Activated naive CD8-positive, alpha-beta T cell treated with anti-CD3 and anti-CD28 coated beads, Interleukin-2, amount 10 ng/mL, durations not matched to agents 7 days and 5 days (primary cell): ENCODE measurements at regions of chr1 and their contacts with region 1.

Region 1: GRCh38 chr1:223831755-223832636 is 13.8 kb downstream of the TP53BP2 start:
- DNase-seq: no peak
- ATAC-seq: peak; percentile 44
- H3K4me3 Mint-ChIP-seq: peak overlapping the region; percentile 43
- H3K27ac Mint-ChIP-seq: peak overlapping the region; percentile 37
- H3K4me1 Mint-ChIP-seq: peaks cover 18% of the 10 kb centered on the region
- H3K27me3 Mint-ChIP-seq: no peaks in the 10 kb centered on the region

Region 2: DNA sequence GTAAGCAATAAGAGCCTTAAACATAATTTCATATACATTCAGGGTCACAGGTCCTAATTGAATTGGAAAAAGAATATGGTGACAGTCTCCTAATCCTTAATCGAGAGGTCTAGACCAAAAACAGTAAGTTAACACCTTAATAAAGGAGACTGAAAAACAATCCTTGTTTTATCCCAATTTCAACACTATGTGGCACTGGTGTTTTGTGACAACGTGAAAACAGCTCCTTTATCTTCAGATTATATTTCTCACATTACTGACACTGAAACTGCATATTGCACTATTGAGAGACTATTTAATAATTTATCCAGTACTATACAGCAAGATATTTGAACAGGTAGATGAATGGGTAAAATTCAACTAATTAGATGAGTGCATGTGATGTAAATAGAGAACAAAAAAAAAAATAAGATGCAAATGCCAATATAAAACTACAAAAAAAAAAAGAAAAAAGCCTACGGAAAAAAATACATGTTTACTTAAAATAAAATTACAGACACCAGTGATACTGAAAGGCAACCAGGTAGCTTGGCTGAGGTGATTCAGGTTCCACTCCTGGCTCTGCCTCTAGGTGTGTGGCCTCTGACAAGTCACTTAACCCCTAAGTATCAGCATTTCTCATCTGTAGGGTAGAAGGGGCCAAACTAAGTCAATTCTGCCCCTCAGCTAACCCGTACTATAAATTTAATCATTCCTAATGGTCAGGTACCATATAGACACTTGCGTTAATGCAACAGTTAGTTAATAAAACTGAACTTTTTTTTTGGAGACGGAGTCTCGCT is 20.2 kb before region 1 on chr1:
- POLR2A ChIA-PET with region 1: no interaction called
- DNase-seq: no peak
- ATAC-seq: no peak
- H3K4me3 Mint-ChIP-seq: no peak overlapping the region
- H3K27ac Mint-ChIP-seq: no peak overlapping the region
- H3K4me1 Mint-ChIP-seq: peaks cover 18% of the 10 kb centered on the region
- H3K27me3 Mint-ChIP-seq: no peaks in the 10 kb centered on the region

Region 3: DNA sequence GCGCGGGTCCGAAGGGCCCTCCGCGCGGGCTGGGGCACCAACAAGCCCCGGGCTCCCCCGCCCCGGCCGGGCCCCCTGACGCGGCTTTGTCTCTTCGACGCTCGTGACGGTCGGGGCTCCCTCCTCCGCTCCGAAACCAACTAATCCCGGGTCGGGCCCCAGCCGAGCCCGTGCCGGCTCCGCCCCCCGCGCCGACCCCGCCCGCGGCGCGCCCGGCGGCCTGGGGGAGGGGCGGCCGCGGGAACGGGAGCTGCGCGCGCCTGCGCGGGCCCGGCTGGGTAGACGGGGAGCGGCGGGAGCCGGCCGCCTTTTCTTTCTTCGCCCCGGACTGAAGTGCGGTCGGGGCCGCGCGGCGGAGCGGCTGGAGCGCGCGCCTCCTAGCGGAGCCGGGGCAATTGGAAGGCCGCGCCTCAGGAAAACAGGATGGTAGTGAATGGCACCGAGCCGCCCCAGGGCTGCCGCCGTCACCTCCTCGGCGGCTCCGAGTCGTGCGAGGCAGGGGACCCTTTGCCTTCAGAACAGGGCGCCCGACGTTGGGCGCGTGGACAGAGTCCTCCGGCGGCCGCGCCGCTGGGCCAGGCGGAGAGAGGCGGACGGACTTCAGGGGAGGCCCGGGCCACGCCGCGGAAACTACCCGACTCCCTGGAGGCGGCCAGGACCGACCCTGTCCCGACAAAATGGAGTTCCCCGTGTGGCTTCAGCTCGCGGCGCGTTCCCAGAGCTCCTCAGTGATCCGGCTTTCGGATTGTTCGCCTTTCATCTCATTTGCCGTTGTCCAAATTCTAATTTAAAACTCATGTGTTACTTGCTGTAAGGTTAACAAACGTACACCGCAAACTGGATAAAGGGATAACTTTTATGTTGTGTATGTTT is 14.1 kb after region 1 on chr1 and contains the start of gene TP53BP2:
- POLR2A ChIA-PET with region 1: interaction called, 24 read pairs
- DNase-seq: peak; percentile 94
- ATAC-seq: peak; percentile 81
- H3K4me3 Mint-ChIP-seq: peak within 1 kb of the TSS; percentile 98
- H3K27ac Mint-ChIP-seq: peak within 1 kb of the TSS; percentile 96
- H3K4me1 Mint-ChIP-seq: peaks cover 26% of the 10 kb centered on the region
- H3K27me3 Mint-ChIP-seq: no peaks in the 10 kb centered on the region
- total RNA-seq, gene TP53BP2: 35.4 to 37.2 TPM

Region 4: GRCh38 chr1:223859058-223859457 is 27.1 kb after region 1 on chr1:
- POLR2A ChIA-PET with region 1: no interaction called
- DNase-seq: no peak
- ATAC-seq: no peak
- H3K4me3 Mint-ChIP-seq: no peak overlapping the region
- H3K27ac Mint-ChIP-seq: no peak overlapping the region
- H3K4me1 Mint-ChIP-seq: no peaks in the 10 kb centered on the region
- H3K27me3 Mint-ChIP-seq: peaks cover 9% of the 10 kb centered on the region